IMR-90 (cell line): ENCODE measurements at regions of chr3 and their contacts with region 1.

Region 1: DNA sequence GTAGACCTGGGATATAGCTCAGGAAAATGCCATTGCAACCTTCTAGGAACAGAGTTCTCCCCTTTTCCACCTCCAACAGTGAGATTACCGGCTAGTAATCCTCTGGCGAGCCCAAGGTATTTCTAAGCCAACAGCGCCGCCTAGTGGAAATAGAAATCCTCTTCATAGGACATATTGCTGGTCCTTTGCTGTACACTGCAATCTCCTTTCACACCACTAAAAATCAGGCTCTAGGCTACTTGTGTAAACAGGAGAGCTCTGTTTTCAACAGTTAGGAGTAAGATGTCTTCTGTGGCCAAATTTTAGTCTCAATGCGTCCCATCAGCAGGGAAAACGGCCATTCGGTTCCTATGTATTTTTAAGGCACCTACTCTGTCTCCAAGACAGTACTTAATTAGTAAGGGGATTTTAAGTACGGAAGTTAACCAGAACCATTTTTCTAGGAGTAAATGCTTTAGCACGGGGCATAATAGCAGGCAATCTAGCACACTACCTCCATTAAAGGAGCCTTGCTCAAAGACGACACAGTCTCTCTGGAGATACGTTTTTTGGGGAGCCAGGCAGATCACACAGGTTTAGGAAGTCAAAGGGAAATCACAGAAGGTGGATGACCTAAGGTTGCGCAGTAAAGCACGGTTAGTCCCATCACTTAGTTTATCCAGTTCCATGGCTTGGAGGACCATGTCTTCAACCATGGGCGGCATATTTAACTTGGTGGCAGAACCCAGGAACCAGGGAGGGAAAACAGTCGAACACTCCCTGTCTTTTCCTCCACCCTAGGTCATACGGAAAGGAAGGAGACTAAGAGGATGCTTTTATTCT is 43.8 kb downstream of the NCEH1 start:
- DNase-seq: peak; percentile 83
- ATAC-seq: peak; percentile 96
- H3K4me3 ChIP-seq: no peak overlapping the region
- H3K27ac ChIP-seq: no peak overlapping the region
- H3K4me1 ChIP-seq: 0 out of 2 replicates have a peak, but pooled peaks cover 2% of the 10 kb centered on the region
- H3K27me3 ChIP-seq: no peaks in the 10 kb centered on the region
- CTCF ChIP-seq: peak; percentile 93
- POLR2A ChIP-seq: no peak
- RAD21 ChIP-seq: peak; percentile 93

Region 2: DNA sequence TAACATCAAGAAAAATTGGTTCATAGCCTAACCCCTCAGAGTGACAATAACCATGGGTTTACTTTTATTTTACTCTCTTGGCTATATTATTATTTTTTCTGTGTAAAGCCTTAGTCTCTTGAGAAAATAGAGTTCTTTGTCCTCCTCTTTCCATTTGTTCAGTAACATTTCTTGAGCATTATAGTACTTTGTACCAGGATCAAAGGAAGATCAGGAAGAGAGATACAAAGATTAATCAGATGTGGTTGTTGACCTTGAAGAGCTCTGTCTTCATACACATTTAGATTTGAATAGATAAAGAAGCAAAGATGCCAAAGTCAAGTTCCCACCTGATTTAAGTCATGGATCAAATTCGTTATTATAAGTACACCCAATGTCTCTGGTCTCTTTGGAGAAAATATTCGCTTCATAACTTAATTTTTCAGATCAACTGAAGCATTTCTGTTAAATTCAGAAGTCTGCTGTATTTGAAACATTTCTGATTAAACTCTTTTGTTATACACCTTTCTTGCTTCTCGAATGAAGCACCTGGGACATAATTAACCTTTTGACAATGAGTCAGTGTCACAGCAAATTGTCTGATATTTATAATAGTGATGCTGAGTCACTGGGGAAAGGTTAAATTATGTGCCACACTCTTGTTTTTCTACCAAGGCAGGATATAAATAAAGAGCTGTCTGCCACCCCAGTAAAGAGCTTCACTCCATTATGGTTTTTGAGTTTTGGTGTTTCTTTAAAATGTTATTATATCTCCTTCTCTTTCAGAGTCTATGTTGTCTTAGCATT is 319.0 kb before region 1 on chr3:
- CTCF ChIA-PET with region 1: no interaction called
- POLR2A ChIA-PET with region 1: no interaction called
- dilution Hi-C with region 1: no loop called
- in situ Hi-C with region 1: no loop called
- intact Hi-C with region 1: loop called (anchors 5 kb)
- DNase-seq: no peak
- ATAC-seq: no peak
- H3K4me3 ChIP-seq: no peak overlapping the region
- H3K27ac ChIP-seq: no peak overlapping the region
- H3K4me1 ChIP-seq: no peaks in the 10 kb centered on the region
- H3K27me3 ChIP-seq: no peaks in the 10 kb centered on the region
- CTCF ChIP-seq: no peak
- POLR2A ChIP-seq: no peak
- RAD21 ChIP-seq: no peak

Region 3: GRCh38 chr3:172367205-172368105 is 299.6 kb before region 1 on chr3:
- CTCF ChIA-PET with region 1: no interaction called
- POLR2A ChIA-PET with region 1: no interaction called
- dilution Hi-C with region 1: no loop called
- in situ Hi-C with region 1: loop called (anchors 10 kb)
- intact Hi-C with region 1: no loop called
- DNase-seq: peak; percentile 70
- ATAC-seq: peak; percentile 74
- H3K4me3 ChIP-seq: no peak overlapping the region
- H3K27ac ChIP-seq: 0 out of 2 replicates have a peak overlapping the region, but pooled peaks have one; percentile 1
- H3K4me1 ChIP-seq: peaks cover 8% of the 10 kb centered on the region
- H3K27me3 ChIP-seq: no peaks in the 10 kb centered on the region
- CTCF ChIP-seq: no peak
- POLR2A ChIP-seq: no peak
- RAD21 ChIP-seq: no peak